ENCODE measurements at regions of chr2 and their contacts with region 1.

Region 1: DNA sequence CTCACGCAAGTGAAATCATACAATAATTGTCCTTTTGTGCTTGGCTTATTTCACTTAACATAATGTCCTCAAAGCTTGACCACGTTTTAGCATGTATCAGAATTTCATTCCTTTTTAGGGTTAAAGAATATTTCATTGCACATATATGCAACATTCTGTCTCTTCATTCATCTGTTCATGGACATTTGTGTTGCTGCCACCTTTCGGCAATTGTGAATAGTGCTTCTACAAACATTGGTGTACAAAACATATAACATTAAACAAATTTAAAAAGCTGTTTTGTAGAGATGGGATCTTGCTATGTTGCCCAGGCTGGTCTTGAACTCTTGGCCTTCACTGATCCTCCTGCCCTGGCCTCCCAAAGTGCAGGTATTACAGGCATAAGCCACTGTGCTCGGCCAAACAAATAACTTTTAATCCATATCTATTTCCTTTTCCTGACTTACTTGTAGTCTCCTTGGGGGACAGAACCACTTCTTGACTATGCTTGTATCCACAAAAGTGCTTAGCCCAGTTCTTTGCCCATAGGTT is 209.3 kb downstream of the SLC4A3 start:
- DNase-seq: no peak
- ATAC-seq: peak; percentile 52

Region 2: GRCh38 chr2:219736209-219736608 is 100.5 kb before region 1 on chr2:
- intact Hi-C with region 1: loop called (anchors 5 kb)
- DNase-seq: no peak
- ATAC-seq: peak; percentile 75

Region 3: DNA sequence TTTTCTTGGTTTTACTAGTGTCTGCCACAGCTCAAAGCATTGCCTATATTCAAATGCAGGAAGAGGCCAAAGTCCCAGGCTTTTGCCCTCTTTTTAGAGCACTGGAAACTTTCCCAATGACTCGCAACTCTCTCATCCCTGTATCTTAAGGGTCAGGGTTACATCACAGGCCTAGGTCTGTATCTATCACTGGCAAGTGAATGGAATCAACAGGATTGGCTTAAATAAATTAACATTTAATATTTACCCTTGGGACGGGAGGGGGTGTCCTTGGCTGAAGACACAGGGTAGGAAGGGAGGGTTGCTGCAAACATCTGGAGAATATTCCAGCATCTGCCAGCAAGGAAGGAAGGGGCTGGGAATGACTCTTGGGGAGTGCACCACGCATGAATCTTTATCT is 33.3 kb after region 1 on chr2:
- intact Hi-C with region 1: no loop called
- DNase-seq: no peak
- ATAC-seq: peak; percentile 34

Measured in Right ventricle myocardium superior (tissue), 1 donor.